ENCODE measurements at regions of chr12 and their contacts with region 1.

Region 1: GRCh38 chr12:122752464-122753318 is at the start of gene DENR:
- DNase-seq: peak; percentile 99
- ATAC-seq: peak; percentile 99
- H3K4me3 ChIP-seq: peak within 1 kb of the TSS; percentile 97
- H3K27ac ChIP-seq: peak within 1 kb of the TSS; percentile 90
- H3K4me1 ChIP-seq: peaks cover 10% of the 10 kb centered on the region
- H3K27me3 ChIP-seq: no peaks in the 10 kb centered on the region
- CTCF ChIP-seq: peak; percentile 81
- total RNA-seq, gene DENR: 29.1 TPM

Region 2: DNA sequence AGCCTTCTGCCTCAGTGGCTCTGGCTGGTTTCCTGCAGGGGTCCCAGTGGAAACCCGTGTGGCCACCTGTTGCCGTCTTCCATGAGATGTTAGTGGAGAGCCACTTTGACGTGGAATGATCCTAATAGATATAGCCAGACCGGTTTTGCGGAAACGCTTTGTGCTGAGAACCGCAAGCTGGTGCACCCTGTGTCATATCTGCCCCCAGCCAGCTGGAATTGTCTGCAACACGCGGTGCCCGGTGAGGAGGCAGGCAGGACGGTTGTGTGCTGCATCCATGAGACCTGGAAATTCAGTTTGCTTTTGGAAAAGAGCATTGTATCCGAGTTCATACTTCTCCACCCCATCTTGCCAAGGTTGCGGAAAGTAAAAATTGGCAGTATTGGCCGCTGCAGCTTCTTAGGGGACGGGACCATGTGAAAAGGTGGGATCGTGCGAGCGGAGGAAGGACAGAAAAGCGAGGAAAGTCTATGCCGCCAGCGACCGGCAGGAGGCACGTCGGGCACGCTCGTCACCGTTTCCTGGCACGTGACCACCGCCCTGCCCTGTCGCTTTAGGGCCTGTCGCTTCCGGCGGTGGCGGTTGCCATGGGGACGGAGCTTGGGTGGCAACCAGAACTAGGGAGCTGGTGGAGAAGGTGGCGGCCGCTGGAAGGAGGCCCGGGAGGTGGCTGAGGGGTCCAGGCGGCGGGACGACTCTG is 834.6 kb before region 1 on chr12 and contains the start of gene CFAP251:
- intact Hi-C with region 1: no loop called
- DNase-seq: peak; percentile 99
- ATAC-seq: peak; percentile 99
- H3K4me3 ChIP-seq: peak within 1 kb of the TSS; percentile 56
- H3K27ac ChIP-seq: peak within 1 kb of the TSS; percentile 53
- H3K4me1 ChIP-seq: peaks cover 6% of the 10 kb centered on the region
- H3K27me3 ChIP-seq: no peaks in the 10 kb centered on the region
- CTCF ChIP-seq: peak; percentile 64
- total RNA-seq, gene CFAP251: 2.5 TPM

Region 3: GRCh38 chr12:122635471-122635870 is 117.2 kb before region 1 on chr12:
- intact Hi-C with region 1: loop called (anchors 5 kb)
- DNase-seq: no peak
- ATAC-seq: no peak
- H3K4me3 ChIP-seq: no peak overlapping the region
- H3K27ac ChIP-seq: no peak overlapping the region
- H3K4me1 ChIP-seq: no peaks in the 10 kb centered on the region
- H3K27me3 ChIP-seq: no peaks in the 10 kb centered on the region
- CTCF ChIP-seq: no peak

Region 4: GRCh38 chr12:122951979-122952892 is 199.5 kb after region 1 on chr12:
- intact Hi-C with region 1: no loop called
- DNase-seq: peak; percentile 83
- ATAC-seq: peak; percentile 95
- H3K4me3 ChIP-seq: no peak overlapping the region
- H3K27ac ChIP-seq: no peak overlapping the region
- H3K4me1 ChIP-seq: peaks cover 2% of the 10 kb centered on the region
- H3K27me3 ChIP-seq: no peaks in the 10 kb centered on the region
- CTCF ChIP-seq: peak; percentile 91

Measured in upper lobe of right lung (tissue), 1 donor.